ENCODE measurements at regions of chr12 and their contacts with region 1.

Region 1: GRCh38 chr12:6851921-6852650 is at the start of gene USP5:
- DNase-seq: peak; percentile 92 to 100 (median 99)
- ATAC-seq: peak; percentile 78 to 81 (median 79)
- H3K4me3 ChIP-seq: peak within 1 kb of the TSS; percentile 69 to 97
- H3K4me3 Mint-ChIP-seq: peak within 1 kb of the TSS; percentile 79 to 98 (median 94)
- H3K27ac ChIP-seq: peak within 1 kb of the TSS; percentile 94
- H3K27ac Mint-ChIP-seq: peak within 1 kb of the TSS; percentile 98 to 99
- H3K4me1 ChIP-seq: peaks cover 20 to 34% of the 10 kb centered on the region in 2 experiments
- H3K4me1 Mint-ChIP-seq: peaks cover 22 to 38% (median 33%) of the 10 kb centered on the region in 3 donors
- H3K27me3 ChIP-seq: no peaks in the 10 kb centered on the region
- H3K27me3 Mint-ChIP-seq: no peaks in the 10 kb centered on the region
- total RNA-seq, gene USP5: 64.2 to 95.8 (median 85.8) TPM

Region 2: GRCh38 chr12:6764011-6764828 is 87.9 kb before region 1 on chr12:
- CTCF ChIA-PET with region 1: interaction called in 1 of 2 experiments, 11 read pairs
- POLR2A ChIA-PET with region 1: no interaction called
- DNase-seq: peak in 29 of 35 experiments; percentile 17 to 77 (median 49)
- ATAC-seq: peak; percentile 54 to 80 (median 58)
- H3K4me3 ChIP-seq: peak overlapping the region in 1 of 2 donors; percentile 10
- H3K4me3 Mint-ChIP-seq: peak overlapping the region; percentile 13 to 76 (median 31)
- H3K27ac ChIP-seq: no peak overlapping the region
- H3K27ac Mint-ChIP-seq: peak overlapping the region in 1 of 2 donors; percentile 43
- H3K4me1 ChIP-seq: peaks cover 9 to 44% of the 10 kb centered on the region in 2 experiments
- H3K4me1 Mint-ChIP-seq: peaks cover 25 to 40% (median 35%) of the 10 kb centered on the region in 3 donors
- H3K27me3 ChIP-seq: peaks cover 0 to 49% of the 10 kb centered on the region in 2 experiments
- H3K27me3 Mint-ChIP-seq: peaks cover 33 to 37% of the 10 kb centered on the region in 2 donors

Region 3: DNA sequence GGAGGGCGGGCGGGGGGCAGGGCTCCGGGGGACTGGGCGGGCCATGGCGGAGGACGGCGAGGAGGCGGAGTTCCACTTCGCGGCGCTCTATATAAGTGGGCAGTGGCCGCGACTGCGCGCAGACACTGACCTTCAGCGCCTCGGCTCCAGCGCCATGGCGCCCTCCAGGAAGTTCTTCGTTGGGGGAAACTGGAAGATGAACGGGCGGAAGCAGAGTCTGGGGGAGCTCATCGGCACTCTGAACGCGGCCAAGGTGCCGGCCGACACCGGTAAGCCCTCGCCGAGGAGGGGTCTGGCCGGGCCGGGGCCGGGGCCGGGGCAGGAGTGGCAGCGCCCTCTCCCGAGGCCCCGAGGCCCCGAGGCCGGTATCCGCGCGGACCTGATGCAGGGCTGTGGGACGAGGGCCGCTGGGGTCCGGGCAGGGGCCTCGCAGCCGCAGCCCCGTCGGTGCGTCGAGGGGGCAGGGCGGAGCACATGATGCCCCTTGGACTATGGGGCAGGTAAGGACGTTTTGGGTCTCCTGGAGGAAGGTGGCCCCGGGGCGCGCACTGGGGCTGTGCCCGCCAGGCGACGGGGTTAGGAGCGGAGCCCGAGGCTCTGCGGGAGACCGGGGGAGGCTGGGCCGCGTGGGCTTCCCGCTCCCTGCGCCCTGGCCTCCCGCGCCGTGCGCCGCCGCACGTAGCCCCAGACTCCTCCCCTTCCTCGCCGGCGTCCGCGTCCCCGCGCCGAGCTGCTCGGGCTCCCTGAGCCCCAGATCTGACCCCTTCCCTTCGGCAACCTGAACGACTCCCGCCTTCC is 15.5 kb after region 1 on chr12 and contains the start of gene TPI1:
- CTCF ChIA-PET with region 1: interaction called, 5 to 58 read pairs
- POLR2A ChIA-PET with region 1: interaction called, 3 to 11 read pairs
- DNase-seq: peak in 33 of 35 experiments; percentile 32 to 82 (median 52)
- ATAC-seq: peak; percentile 75 to 79 (median 76)
- H3K4me3 ChIP-seq: peak within 1 kb of the TSS; percentile 62 to 65
- H3K4me3 Mint-ChIP-seq: peak within 1 kb of the TSS; percentile 86 to 92 (median 87)
- H3K27ac ChIP-seq: peak within 1 kb of the TSS; percentile 86
- H3K27ac Mint-ChIP-seq: peak within 1 kb of the TSS; percentile 91
- H3K4me1 ChIP-seq: peaks cover 20 to 56% of the 10 kb centered on the region in 2 experiments
- H3K4me1 Mint-ChIP-seq: peaks cover 49 to 54% (median 51%) of the 10 kb centered on the region in 3 donors
- H3K27me3 ChIP-seq: no peaks in the 10 kb centered on the region
- H3K27me3 Mint-ChIP-seq: no peaks in the 10 kb centered on the region
- total RNA-seq, gene TPI1: 132 to 208 (median 189) TPM

Region 4: DNA sequence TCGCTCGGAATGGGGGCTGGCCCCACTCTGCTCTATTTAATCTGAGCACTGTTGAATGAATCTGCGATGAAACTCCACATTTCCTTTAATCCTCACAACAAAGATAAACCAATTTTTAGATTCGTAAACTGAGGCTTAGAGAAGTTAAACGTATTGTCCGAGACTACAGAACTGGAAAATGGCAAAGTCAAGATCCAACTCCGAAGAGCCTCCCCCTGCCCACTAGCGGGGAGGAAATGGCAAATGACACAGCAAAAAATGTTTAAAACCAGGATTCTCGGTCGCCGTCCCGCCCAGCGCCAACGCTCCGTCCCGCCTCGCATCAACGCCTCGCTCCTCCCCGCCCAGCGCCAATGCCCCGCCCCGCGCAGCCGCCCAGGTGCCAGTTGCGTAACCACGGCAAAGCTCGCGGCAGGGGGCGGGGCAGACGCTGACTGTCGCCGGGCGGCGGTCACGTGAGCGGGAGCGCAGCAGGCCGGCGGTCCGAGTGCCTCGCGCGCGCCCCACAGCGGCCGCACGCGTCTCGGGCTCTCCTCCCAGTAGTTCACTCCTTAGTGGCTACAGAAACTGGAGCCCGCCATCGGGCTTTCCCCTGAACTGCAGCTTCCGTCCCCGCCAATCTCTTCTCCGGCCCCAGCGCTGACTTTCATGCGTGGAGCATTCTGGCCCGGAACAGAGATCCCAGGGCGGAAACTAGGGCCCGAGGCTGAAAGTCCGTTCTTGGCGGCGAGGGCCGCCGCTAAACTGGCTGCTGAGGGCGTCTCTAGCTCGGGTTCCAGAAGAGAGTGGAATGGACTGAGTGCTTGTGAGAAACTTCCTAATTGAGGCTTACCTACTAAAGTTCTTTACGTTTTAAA is 38.9 kb after region 1 on chr12:
- CTCF ChIA-PET with region 1: interaction called in 1 of 2 experiments, 15 read pairs
- POLR2A ChIA-PET with region 1: interaction called in 1 of 2 experiments, 3 read pairs
- DNase-seq: peak; percentile 94 to 100 (median 98)
- ATAC-seq: peak; percentile 93 to 98 (median 96)
- H3K4me3 ChIP-seq: peak overlapping the region; percentile 56 to 71
- H3K4me3 Mint-ChIP-seq: peak overlapping the region; percentile 77 to 80 (median 80)
- H3K27ac ChIP-seq: peak overlapping the region; percentile 90
- H3K27ac Mint-ChIP-seq: peak overlapping the region; percentile 89 to 90
- H3K4me1 ChIP-seq: peaks cover 3 to 16% of the 10 kb centered on the region in 2 experiments
- H3K4me1 Mint-ChIP-seq: peaks cover 13 to 15% (median 13%) of the 10 kb centered on the region in 3 donors
- H3K27me3 ChIP-seq: no peaks in the 10 kb centered on the region
- H3K27me3 Mint-ChIP-seq: no peaks in the 10 kb centered on the region

Region 5: GRCh38 chr12:6927379-6928024 is 75.4 kb after region 1 on chr12 and contains the start of gene ATN1:
- CTCF ChIA-PET with region 1: no interaction called
- POLR2A ChIA-PET with region 1: no interaction called
- DNase-seq: peak in 10 of 35 experiments; percentile 11 to 58 (median 39)
- ATAC-seq: peak; percentile 24 to 45 (median 40)
- H3K4me3 ChIP-seq: peak within 1 kb of the TSS; percentile 58 to 74
- H3K4me3 Mint-ChIP-seq: peak within 1 kb of the TSS; percentile 83 to 95 (median 85)
- H3K27ac ChIP-seq: peak within 1 kb of the TSS; percentile 81
- H3K27ac Mint-ChIP-seq: peak within 1 kb of the TSS; percentile 94 to 96
- H3K4me1 ChIP-seq: peaks cover 19 to 41% of the 10 kb centered on the region in 2 experiments
- H3K4me1 Mint-ChIP-seq: peaks cover 46 to 64% (median 63%) of the 10 kb centered on the region in 3 donors
- H3K27me3 ChIP-seq: no peaks in the 10 kb centered on the region
- H3K27me3 Mint-ChIP-seq: no peaks in the 10 kb centered on the region
- total RNA-seq, gene ATN1: 34.7 to 44.3 (median 41.7) TPM

Region 6: GRCh38 chr12:7188562-7189397 is 336.7 kb after region 1 on chr12:
- CTCF ChIA-PET with region 1: no interaction called
- POLR2A ChIA-PET with region 1: interaction called in 1 of 2 experiments, 13 read pairs
- DNase-seq: peak; percentile 15 to 75 (median 57)
- ATAC-seq: peak; percentile 28 to 39 (median 32)
- H3K4me3 ChIP-seq: peak overlapping the region; percentile 60 to 81
- H3K4me3 Mint-ChIP-seq: peak overlapping the region; percentile 91 to 96 (median 96)
- H3K27ac ChIP-seq: peak overlapping the region; percentile 74
- H3K27ac Mint-ChIP-seq: peak overlapping the region; percentile 96 to 97
- H3K4me1 ChIP-seq: peaks cover 7 to 28% of the 10 kb centered on the region in 2 experiments
- H3K4me1 Mint-ChIP-seq: peaks cover 39 to 48% (median 41%) of the 10 kb centered on the region in 3 donors
- H3K27me3 ChIP-seq: no peaks in the 10 kb centered on the region
- H3K27me3 Mint-ChIP-seq: no peaks in the 10 kb centered on the region

Region 7: GRCh38 chr12:7219599-7220243 is 367.6 kb after region 1 on chr12:
- CTCF ChIA-PET with region 1: no interaction called
- POLR2A ChIA-PET with region 1: no interaction called
- DNase-seq: peak; percentile 32 to 86 (median 67)
- ATAC-seq: peak; percentile 54 to 63 (median 56)
- H3K4me3 ChIP-seq: no peak overlapping the region
- H3K4me3 Mint-ChIP-seq: no peak overlapping the region
- H3K27ac ChIP-seq: no peak overlapping the region
- H3K27ac Mint-ChIP-seq: no peak overlapping the region
- H3K4me1 ChIP-seq: no peaks in the 10 kb centered on the region
- H3K4me1 Mint-ChIP-seq: no peaks in the 10 kb centered on the region
- H3K27me3 ChIP-seq: peaks cover 0 to 3% of the 10 kb centered on the region in 2 experiments
- H3K27me3 Mint-ChIP-seq: no peaks in the 10 kb centered on the region